Calu3 (cell line): ENCODE measurements at regions of chr12 and their contacts with region 1.

Region 1: GRCh38 chr12:111599459-111600204 is 517 bp upstream of the ATXN2 start:
- DNase-seq: peak; percentile 95
- H3K4me3 Mint-ChIP-seq: peak overlapping the region; percentile 94
- H3K27ac Mint-ChIP-seq: peak overlapping the region; percentile 99
- H3K4me1 Mint-ChIP-seq: peaks cover 14% of the 10 kb centered on the region
- H3K27me3 Mint-ChIP-seq: no peaks in the 10 kb centered on the region
- CTCF ChIP-seq: no peak

Region 2: GRCh38 chr12:111488271-111488670 is 111.4 kb before region 1 on chr12:
- CTCF ChIA-PET with region 1: no interaction called
- intact Hi-C with region 1: no loop called
- DNase-seq: no peak
- H3K4me3 Mint-ChIP-seq: no peak overlapping the region
- H3K27ac Mint-ChIP-seq: no peak overlapping the region
- H3K4me1 Mint-ChIP-seq: no peaks in the 10 kb centered on the region
- H3K27me3 Mint-ChIP-seq: no peaks in the 10 kb centered on the region
- CTCF ChIP-seq: no peak

Region 3: GRCh38 chr12:111557271-111558106 is 42.1 kb before region 1 on chr12:
- CTCF ChIA-PET with region 1: interaction called, 3 read pairs
- intact Hi-C with region 1: loop called (anchors 5 kb)
- DNase-seq: no peak
- H3K4me3 Mint-ChIP-seq: no peak overlapping the region
- H3K27ac Mint-ChIP-seq: no peak overlapping the region
- H3K4me1 Mint-ChIP-seq: peaks cover 27% of the 10 kb centered on the region
- H3K27me3 Mint-ChIP-seq: no peaks in the 10 kb centered on the region
- CTCF ChIP-seq: no peak

Region 4: GRCh38 chr12:111624540-111624939 is 24.9 kb after region 1 on chr12:
- CTCF ChIA-PET with region 1: no interaction called
- intact Hi-C with region 1: no loop called
- DNase-seq: peak; percentile 74
- H3K4me3 Mint-ChIP-seq: peak overlapping the region; percentile 20
- H3K27ac Mint-ChIP-seq: peak overlapping the region; percentile 17
- H3K4me1 Mint-ChIP-seq: peaks cover 21% of the 10 kb centered on the region
- H3K27me3 Mint-ChIP-seq: no peaks in the 10 kb centered on the region
- CTCF ChIP-seq: no peak